ENCODE measurements at regions of chr4 and their contacts with region 1.

Region 1: GRCh38 chr4:127548990-127549925 is 83.5 kb upstream of the INTU start:
- DNase-seq: no peak
- ATAC-seq: no peak
- H3K4me3 ChIP-seq: no peak overlapping the region
- H3K27ac ChIP-seq: no peak overlapping the region
- H3K4me1 ChIP-seq: no peaks in the 10 kb centered on the region
- H3K27me3 ChIP-seq: no peaks in the 10 kb centered on the region
- CTCF ChIP-seq: no peak

Region 2: GRCh38 chr4:127668770-127669169 is 119.5 kb after region 1 on chr4:
- intact Hi-C with region 1: loop called in 1 of 10 experiments (anchors 5 kb)
- DNase-seq: no peak
- ATAC-seq: no peak
- H3K4me3 ChIP-seq: no peak overlapping the region
- H3K27ac ChIP-seq: no peak overlapping the region
- H3K4me1 ChIP-seq: no peaks in the 10 kb centered on the region
- H3K27me3 ChIP-seq: no peaks in the 10 kb centered on the region
- CTCF ChIP-seq: no peak

Measured in heart right ventricle (tissue), 16 donors.